Mammary epithelial cell (primary cell): ENCODE measurements at regions of chr2 and their contacts with region 1.

Region 1: DNA sequence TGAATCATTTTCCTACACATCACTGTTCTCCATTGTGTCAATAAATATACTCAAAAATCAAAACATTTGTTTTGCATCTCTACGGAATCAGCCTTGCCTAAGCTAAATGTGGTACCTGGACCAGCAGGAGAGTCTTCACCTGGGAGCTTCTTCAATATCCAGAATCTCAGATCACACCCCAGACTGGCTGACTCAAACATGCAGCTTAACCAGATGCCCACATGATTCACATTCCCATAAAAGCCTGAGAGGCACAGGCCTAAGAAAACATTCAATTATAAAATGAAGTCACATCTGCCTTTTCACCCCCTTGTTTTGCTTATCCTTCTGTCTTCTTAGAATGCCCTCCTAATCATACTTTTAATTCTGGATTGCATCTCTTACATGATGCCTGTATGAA is 1045.5 kb upstream of the NXPH2 start:
- DNase-seq: peak; percentile 3
- H3K4me3 ChIP-seq: no peak overlapping the region
- H3K27ac ChIP-seq: no peak overlapping the region
- H3K4me1 ChIP-seq: no peaks in the 10 kb centered on the region
- H3K27me3 ChIP-seq: no peaks in the 10 kb centered on the region
- CTCF ChIP-seq: no peak

Region 2: GRCh38 chr2:139704606-139705005 is 121.1 kb before region 1 on chr2:
- CTCF ChIA-PET with region 1: no interaction called
- dilution Hi-C with region 1: no loop called
- in situ Hi-C with region 1: no loop called
- intact Hi-C with region 1: loop called (anchors 5 kb)
- DNase-seq: no peak
- H3K4me3 ChIP-seq: no peak overlapping the region
- H3K27ac ChIP-seq: no peak overlapping the region
- H3K4me1 ChIP-seq: no peaks in the 10 kb centered on the region
- H3K27me3 ChIP-seq: no peaks in the 10 kb centered on the region
- CTCF ChIP-seq: no peak

Region 3: DNA sequence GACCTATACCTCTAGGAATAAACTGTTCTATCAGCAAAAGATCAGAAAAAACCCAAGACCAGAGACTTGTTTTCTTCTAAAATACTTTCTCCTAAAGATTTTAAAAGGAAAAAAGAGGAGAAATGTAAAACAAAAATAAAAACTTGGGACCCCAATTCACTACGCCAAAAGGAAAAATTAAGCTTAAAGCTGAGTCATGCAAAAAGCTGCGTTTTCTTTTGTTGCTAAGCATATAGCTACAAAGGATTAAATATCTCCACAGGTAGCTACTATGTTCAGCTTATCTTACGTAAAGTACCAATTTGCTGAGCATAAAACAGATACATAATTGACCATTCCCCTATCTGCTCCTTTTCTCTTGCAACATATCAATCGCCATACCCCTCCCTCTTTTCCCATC is 95.5 kb before region 1 on chr2:
- CTCF ChIA-PET with region 1: no interaction called
- dilution Hi-C with region 1: no loop called
- in situ Hi-C with region 1: no loop called
- intact Hi-C with region 1: no loop called
- DNase-seq: no peak
- H3K4me3 ChIP-seq: no peak overlapping the region
- H3K27ac ChIP-seq: no peak overlapping the region
- H3K4me1 ChIP-seq: no peaks in the 10 kb centered on the region
- H3K27me3 ChIP-seq: no peaks in the 10 kb centered on the region
- CTCF ChIP-seq: no peak